ENCODE measurements at regions of chr22 and their contacts with region 1.

Region 1: GRCh38 chr22:40645579-40646197 is 9.2 kb upstream of the MRTFA start:
- DNase-seq: no peak

Region 2: GRCh38 chr22:40436505-40437451 is 208.9 kb before region 1 on chr22:
- in situ Hi-C with region 1: loop called (anchors 5 kb)
- DNase-seq: peak; percentile 68

Region 3: GRCh38 chr22:40485813-40486667 is 159.6 kb before region 1 on chr22:
- in situ Hi-C with region 1: no loop called
- DNase-seq: no peak

Region 4: DNA sequence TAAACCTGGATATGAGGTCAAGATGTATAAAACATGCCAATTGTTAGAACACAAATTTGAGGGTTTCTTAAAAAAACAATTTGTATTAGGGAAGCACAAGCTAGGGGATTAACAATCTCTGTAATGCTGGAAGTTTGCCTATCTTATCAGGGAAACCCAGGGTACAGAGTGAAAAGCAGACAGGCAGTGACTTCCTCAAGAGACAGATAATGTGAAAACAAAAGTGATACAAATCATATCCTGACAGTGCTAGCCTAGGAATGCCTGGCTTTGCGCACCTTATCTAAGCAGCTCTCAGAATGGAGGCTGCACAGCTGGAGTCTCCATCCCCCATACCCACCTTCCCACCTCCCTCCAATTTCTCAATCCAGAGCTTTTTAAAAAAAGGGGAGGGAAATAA is 283.0 kb after region 1 on chr22:
- in situ Hi-C with region 1: no loop called
- DNase-seq: no peak

Measured in Caki2 (cell line).